ENCODE measurements at regions of chr9 and their contacts with region 1.

Region 1: DNA sequence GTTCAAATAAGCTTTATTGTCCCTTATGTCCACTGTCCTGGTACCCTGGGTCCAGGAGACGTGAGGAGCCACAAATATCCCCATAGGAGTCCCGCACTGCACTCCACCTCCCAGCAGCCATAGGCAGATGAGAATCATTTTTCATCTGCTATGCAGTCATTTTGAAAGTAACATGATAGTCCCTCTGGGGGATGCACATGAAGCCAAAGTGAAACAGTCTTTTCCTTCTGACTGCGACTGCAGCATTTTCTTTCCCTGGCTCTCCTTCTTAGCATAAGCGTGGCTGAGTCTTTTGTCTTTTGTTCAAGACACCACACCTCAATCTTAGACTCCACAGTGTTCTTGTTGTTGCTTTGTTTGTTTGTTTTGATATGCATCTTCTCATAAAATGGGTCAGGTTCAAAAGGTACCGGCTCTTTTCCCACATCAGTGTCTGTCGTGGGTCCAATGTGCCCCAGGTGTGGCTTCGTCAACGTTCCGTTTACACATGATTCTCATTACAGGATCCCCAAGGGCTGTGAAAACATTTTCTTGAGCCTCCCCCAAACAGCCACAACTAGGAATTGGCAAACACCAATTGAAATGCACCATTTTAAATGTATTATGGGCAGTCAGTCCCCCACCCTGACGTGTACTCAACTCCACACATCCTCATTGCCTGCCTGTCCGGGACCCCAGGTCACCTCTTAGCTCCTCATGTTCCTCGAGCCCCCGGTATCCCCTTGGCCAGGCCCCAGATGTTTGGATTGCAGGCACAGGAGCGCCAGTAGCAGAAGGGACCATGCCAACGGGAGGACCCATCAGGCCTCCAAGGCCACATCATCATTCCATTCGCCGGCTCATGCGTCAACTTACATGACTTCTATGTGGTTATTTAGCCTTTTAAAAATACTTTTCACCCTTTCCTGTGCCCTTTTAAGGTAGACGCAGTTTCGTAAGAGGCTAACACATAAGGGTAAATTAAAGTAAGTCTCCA is 237.8 kb upstream of the DAPK1 start:
- DNase-seq: no peak
- ATAC-seq: no peak
- H3K4me3 ChIP-seq: no peak overlapping the region
- H3K27ac ChIP-seq: no peak overlapping the region
- H3K4me1 ChIP-seq: no peaks in the 10 kb centered on the region
- H3K27me3 ChIP-seq: no peaks in the 10 kb centered on the region
- CTCF ChIP-seq: no peak
- POLR2A ChIP-seq: no peak

Region 2: GRCh38 chr9:87310827-87311523 is 51.1 kb after region 1 on chr9:
- intact Hi-C with region 1: loop called in 1 of 2 experiments (anchors 10 kb)
- DNase-seq: no peak
- ATAC-seq: no peak
- H3K4me3 ChIP-seq: no peak overlapping the region
- H3K27ac ChIP-seq: no peak overlapping the region
- H3K4me1 ChIP-seq: no peaks in the 10 kb centered on the region
- H3K27me3 ChIP-seq: no peaks in the 10 kb centered on the region
- CTCF ChIP-seq: no peak
- POLR2A ChIP-seq: no peak

Region 3: DNA sequence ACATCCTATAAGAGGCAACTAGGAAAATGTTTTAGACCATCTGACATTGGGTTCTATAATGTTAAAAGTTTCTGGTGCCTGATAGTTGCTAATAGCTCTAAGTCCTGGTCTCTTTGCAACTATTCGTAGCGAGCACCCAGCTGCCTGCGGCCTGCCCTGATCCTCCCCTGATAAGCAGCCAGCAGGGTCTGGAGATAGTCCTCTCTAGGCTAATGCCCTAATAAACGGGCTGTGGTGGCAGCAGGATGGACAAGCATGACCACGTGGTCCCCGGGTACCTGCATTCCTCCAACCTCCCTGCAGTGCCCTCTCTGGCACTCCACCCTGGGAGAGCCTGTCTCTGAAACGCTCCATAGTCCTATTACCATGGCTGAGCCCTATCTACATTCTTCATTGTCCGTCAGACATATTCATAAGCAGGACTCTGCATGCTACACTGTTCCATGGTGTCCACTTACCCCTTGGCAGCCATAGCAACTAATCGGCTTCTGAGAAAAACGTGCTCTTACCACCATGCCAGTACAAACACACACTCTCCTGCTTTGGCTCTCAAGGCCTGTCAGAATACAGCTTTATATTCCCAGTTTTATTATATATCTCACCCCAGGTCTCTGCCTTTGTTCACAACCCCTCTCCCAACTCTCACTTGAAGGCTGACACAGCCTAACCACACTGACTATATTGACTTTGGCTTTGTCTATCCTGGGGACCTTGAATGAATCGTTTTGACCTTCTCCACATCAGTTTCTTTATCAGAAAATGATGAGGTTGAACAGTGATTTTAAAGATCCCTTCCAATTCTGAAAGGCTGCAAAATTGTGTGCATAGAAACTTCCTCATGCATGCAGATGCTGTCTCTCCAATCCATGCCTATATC is 188.0 kb after region 1 on chr9:
- intact Hi-C with region 1: no loop called
- DNase-seq: no peak
- ATAC-seq: no peak
- H3K4me3 ChIP-seq: no peak overlapping the region
- H3K27ac ChIP-seq: no peak overlapping the region
- H3K4me1 ChIP-seq: no peaks in the 10 kb centered on the region
- H3K27me3 ChIP-seq: no peaks in the 10 kb centered on the region
- CTCF ChIP-seq: no peak
- POLR2A ChIP-seq: no peak